Activated CD4-positive, alpha-beta memory T cell treated with anti-CD3 and anti-CD28 coated beads, Interleukin-2, amount 10 ng/mL, durations not matched to agents 7 days and 5 days (primary cell): ENCODE measurements at regions of chr9 and their contacts with region 1.

Region 1: GRCh38 chr9:132978451-132979131 is at the start of gene GFI1B:
- DNase-seq: no peak
- H3K4me3 Mint-ChIP-seq: no peak within 1 kb of the TSS
- H3K27ac Mint-ChIP-seq: no peak within 1 kb of the TSS
- H3K4me1 Mint-ChIP-seq: peaks cover 4% of the 10 kb centered on the region
- H3K27me3 Mint-ChIP-seq: peaks cover 49% of the 10 kb centered on the region
- total RNA-seq, gene GFI1B: not detected

Region 2: GRCh38 chr9:133023117-133023890 is 44.7 kb after region 1 on chr9:
- CTCF ChIA-PET with region 1: interaction called, 10 read pairs
- POLR2A ChIA-PET with region 1: no interaction called
- DNase-seq: peak; percentile 76
- H3K4me3 Mint-ChIP-seq: peak overlapping the region; percentile 44
- H3K27ac Mint-ChIP-seq: peak overlapping the region; percentile 49
- H3K4me1 Mint-ChIP-seq: peaks cover 20% of the 10 kb centered on the region
- H3K27me3 Mint-ChIP-seq: peaks cover 4% of the 10 kb centered on the region